Testis (tissue), 5 donors: ENCODE measurements at regions of chr17 and their contacts with region 1.

Region 1: DNA sequence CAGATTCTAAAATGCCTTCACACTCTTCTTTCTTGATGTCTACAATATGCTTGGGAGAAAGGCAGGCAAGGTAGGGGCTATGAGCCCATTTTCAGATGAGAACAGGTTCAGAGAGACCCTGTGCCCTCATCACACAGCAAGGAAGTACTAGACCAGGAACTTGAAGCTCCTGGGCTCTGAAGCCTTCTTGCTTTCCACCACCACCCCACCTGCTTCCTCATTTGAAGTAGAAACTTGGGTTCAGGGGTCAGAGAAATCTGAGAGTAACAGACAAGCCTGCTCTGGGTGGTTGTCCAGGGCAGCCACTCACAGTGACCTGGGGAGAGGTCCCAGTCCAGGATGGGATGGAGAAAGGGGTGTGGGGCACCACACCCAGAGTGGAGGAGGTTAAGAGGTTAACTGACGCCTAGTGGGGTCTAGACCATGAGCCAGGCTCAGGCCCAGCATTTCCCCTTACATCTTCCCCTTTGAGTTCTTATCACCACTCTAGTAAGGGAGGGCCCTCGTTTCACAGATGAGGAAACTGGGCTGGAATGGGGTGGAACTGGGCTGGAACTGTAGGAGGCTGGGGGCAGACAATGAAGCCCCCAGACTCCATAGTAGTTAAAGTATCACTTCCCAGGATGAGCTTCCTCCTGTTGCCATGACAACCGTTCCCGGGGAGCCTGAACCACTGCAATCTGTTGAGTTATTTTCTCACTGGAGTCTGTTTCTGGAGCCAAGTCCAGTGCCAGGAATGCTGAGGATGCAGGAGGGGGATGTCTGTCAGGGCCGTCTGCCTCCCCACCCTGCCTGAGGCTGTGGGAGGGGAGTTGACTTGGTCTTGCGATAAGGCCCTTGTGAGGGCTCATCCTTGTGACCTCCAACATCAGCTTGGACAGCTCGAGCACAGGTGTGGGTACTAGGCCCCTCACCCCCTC is 16.2 kb upstream of the PHF12 start:
- DNase-seq: no peak
- H3K4me3 ChIP-seq: no peak overlapping the region
- H3K27ac ChIP-seq: no peak overlapping the region
- H3K4me1 ChIP-seq: no peaks in the 10 kb centered on the region
- H3K27me3 ChIP-seq: no peaks in the 10 kb centered on the region
- CTCF ChIP-seq: no peak
- POLR2A ChIP-seq: no peak

Region 2: DNA sequence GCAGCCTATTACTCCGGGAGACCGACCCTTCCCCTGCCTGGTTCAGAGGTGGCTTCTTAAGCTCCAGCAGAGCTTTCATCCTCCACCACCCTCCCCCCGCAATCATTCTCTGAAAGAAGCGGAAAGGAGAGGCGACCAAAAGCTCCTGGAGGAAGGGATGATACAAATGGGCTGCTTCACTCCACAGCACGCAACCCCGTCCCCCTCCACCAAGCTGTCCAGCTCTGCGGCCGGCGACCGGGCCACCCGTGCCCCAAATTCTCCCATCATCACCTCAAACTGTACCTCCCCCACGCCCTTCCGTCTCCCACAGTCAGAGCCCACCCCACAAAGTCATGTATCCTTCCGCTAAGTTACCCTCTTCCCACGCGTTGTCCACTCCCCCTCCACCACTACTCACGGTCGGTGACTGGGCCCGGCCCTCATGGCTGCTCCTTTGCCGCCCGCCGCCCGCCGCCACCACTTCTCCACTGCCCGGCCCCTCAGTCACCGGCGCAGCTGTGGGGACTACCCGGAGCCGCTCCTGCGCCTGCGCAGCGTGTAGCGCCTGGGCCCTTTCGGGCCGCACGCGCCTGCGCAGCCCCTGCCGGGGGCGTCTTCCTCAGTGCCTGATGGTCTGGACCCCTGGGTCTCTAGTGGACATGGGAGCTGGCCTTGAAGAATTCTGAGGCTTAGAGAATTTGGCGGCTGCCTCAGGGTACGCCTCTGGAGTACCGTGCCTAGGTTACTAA is 125.0 kb before region 1 on chr17 and contains the start of gene FAM222B:
- intact Hi-C with region 1: no loop called
- DNase-seq: peak; percentile 85
- H3K4me3 ChIP-seq: peak within 1 kb of the TSS; percentile 82 to 88
- H3K27ac ChIP-seq: peak within 1 kb of the TSS; percentile 51 to 81
- H3K4me1 ChIP-seq: peaks cover 2% of the 10 kb centered on the region
- H3K27me3 ChIP-seq: no peaks in the 10 kb centered on the region
- CTCF ChIP-seq: peak in 1 of 3 experiments; percentile 4
- POLR2A ChIP-seq: no peak
- total RNA-seq, gene FAM222B: 69.6 to 74.5 TPM

Region 3: GRCh38 chr17:29107941-29108419 is 140.5 kb after region 1 on chr17:
- intact Hi-C with region 1: loop called (anchors 5 kb)
- DNase-seq: no peak
- H3K4me3 ChIP-seq: no peak overlapping the region
- H3K27ac ChIP-seq: peak overlapping the region in 1 of 2 donors; percentile 34
- H3K4me1 ChIP-seq: peaks cover 7% of the 10 kb centered on the region
- H3K27me3 ChIP-seq: no peaks in the 10 kb centered on the region
- CTCF ChIP-seq: no peak
- POLR2A ChIP-seq: no peak

Region 4: GRCh38 chr17:29283271-29283895 is 315.9 kb after region 1 on chr17:
- intact Hi-C with region 1: loop called (anchors 10 kb)
- DNase-seq: no peak
- H3K4me3 ChIP-seq: no peak overlapping the region
- H3K27ac ChIP-seq: no peak overlapping the region
- H3K4me1 ChIP-seq: no peaks in the 10 kb centered on the region
- H3K27me3 ChIP-seq: no peaks in the 10 kb centered on the region
- CTCF ChIP-seq: no peak
- POLR2A ChIP-seq: no peak

Region 5: DNA sequence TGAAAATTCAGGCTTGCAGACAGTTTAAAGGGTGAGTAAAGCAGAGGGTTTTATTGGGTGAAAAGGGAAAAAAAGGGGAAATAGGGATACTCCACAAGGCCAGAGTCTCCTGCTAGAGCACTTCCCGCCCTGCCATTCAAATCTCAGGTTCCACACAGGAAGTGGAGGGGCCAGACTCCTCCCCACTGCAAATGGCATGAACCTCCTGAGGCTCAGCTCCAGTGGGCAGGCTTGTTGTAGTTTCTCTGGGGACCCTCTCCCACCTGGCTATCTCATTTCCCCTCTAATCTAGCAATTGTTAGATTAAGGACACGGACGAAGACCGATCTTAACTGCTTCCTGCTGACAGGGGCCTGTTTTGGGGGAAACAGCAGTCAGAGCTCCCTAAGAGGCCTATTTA is 466.1 kb after region 1 on chr17:
- intact Hi-C with region 1: no loop called
- DNase-seq: no peak
- H3K4me3 ChIP-seq: no peak overlapping the region
- H3K27ac ChIP-seq: no peak overlapping the region
- H3K4me1 ChIP-seq: peaks cover 3% of the 10 kb centered on the region
- H3K27me3 ChIP-seq: no peaks in the 10 kb centered on the region
- CTCF ChIP-seq: no peak
- POLR2A ChIP-seq: no peak